Common myeloid progenitor, CD34-positive (primary cell): ENCODE measurements at regions of chr2 and their contacts with region 1.

Region 1: GRCh38 chr2:237691908-237692600 is 64.7 kb downstream of the LRRFIP1 start:
- DNase-seq: peak; percentile 83 to 90 (median 90)
- H3K4me3 ChIP-seq: peak overlapping the region; percentile 78 to 99 (median 95)
- H3K27ac ChIP-seq: peak overlapping the region; percentile 90 to 93
- H3K4me1 ChIP-seq: peaks cover 49 to 90% (median 78%) of the 10 kb centered on the region in 4 experiments
- H3K27me3 ChIP-seq: no peaks in the 10 kb centered on the region

Region 2: GRCh38 chr2:237708065-237708398 is 16.0 kb after region 1 on chr2:
- CTCF ChIA-PET with region 1: interaction called, 14 read pairs
- POLR2A ChIA-PET with region 1: interaction called, 4 read pairs
- DNase-seq: no peak
- H3K4me3 ChIP-seq: no peak overlapping the region
- H3K27ac ChIP-seq: peak overlapping the region in 1 of 2 experiments; percentile 1
- H3K4me1 ChIP-seq: peaks cover 8 to 47% (median 42%) of the 10 kb centered on the region in 4 experiments
- H3K27me3 ChIP-seq: no peaks in the 10 kb centered on the region

Region 3: DNA sequence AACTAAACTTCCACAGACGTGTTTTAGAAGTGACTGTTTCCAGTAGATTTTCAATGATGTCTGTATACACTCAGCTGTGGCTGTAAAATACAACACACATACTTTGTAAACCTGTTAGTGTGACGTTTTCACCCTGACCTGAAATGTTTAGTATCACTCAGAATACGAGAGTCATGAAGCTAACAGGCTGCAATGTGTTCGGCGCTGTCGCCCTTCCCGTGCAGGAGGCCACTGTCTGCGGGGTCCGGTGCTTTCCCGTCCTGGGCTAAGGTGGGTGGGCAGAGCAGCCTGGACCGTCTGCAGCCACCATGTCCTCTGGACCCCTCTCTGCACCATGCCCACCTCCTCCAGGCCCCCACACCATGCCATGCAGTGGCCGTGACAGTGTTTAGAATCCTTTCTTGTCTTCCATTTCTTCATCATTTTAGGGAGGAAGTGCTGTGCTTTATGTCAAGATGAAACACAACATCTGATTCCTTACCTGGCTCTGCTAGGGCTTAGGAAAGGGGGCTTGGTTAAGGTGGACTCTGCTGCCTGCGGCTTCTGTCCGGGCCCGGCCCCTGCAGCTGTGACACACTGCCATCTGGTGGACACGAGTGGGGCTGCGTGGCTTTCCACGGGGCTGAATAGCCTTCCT is 52.7 kb after region 1 on chr2:
- CTCF ChIA-PET with region 1: interaction called, 14 read pairs
- POLR2A ChIA-PET with region 1: interaction called, 5 read pairs
- DNase-seq: peak; percentile 60 to 72 (median 68)
- H3K4me3 ChIP-seq: no peak overlapping the region
- H3K27ac ChIP-seq: no peak overlapping the region
- H3K4me1 ChIP-seq: peaks cover 0 to 28% (median 9%) of the 10 kb centered on the region in 4 experiments
- H3K27me3 ChIP-seq: no peaks in the 10 kb centered on the region